Activated naive CD4-positive, alpha-beta T cell treated with anti-CD3 and anti-CD28 coated beads for 36 hours (primary cell): ENCODE measurements at regions of chr16 and their contacts with region 1.

Region 1: GRCh38 chr16:55465077-55465896 is 13.7 kb upstream of the MMP2 start:
- DNase-seq: peak; percentile 89
- H3K4me3 Mint-ChIP-seq: no peak overlapping the region
- H3K27ac Mint-ChIP-seq: no peak overlapping the region
- H3K4me1 Mint-ChIP-seq: no peaks in the 10 kb centered on the region
- H3K27me3 Mint-ChIP-seq: peaks cover 3% of the 10 kb centered on the region

Region 2: DNA sequence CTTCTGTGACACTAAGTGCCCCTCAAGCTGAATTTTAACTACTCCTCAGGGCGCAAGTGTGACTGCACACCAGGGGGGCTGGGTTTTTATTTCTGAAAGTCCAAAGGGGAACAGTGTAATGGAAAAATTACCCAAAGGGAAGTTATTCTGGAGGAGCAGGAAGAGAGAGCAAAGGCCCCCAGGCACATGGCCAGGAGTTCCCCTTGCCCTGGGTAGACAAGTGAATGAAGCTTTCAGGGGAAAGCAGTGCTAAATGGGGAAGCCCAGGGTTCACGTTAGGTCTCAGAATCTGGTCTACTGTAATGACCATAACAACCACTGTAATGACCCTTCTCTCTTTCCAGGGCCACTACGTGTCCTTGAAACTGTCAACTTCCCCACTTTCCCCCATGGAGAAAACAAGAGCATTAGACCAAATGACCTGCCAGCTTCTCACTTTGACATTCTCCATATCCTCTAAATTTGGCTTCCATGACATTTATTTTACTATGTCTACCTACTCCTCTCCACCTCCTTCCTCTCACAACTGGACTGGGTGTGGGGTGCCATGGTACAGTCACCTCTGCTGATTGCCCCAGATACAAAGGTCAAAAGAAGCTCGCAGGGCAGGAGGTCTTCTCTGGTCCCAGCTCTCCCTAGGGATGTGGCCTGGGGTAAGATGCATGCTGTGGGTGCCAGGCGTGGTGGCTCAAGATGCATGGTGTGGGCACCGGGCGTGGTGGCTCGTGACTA is 20.4 kb before region 1 on chr16:
- CTCF ChIA-PET with region 1: interaction called, 19 read pairs
- intact Hi-C with region 1: no loop called
- DNase-seq: no peak
- H3K4me3 Mint-ChIP-seq: no peak overlapping the region
- H3K27ac Mint-ChIP-seq: no peak overlapping the region
- H3K4me1 Mint-ChIP-seq: no peaks in the 10 kb centered on the region
- H3K27me3 Mint-ChIP-seq: peaks cover 9% of the 10 kb centered on the region

Region 3: DNA sequence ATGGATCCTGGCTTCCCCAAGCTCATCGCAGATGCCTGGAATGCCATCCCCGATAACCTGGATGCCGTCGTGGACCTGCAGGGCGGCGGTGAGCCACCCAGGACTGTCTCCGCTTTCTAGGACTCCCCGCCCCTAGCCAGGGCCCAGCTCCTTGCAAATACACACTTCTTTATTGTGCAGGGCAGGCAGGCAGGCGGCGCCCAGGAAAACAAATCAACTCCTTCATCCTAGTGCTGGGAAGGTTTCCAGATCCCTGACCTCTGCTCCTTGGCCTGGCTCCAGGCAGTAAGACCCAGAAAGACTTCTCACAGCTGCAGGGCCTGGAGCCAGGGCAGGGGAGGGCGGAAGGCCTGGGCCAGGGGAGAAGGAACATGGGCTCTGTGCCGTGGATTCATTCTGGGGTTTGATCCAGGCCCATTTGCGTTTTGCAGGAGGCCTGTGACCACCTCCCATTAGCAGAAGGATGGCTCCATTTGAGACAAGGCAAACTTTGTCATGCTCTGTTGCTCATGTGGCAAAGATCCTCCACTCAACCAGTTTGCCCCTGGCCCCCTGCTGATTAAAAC is 37.6 kb after region 1 on chr16:
- CTCF ChIA-PET with region 1: interaction called, 16 read pairs
- intact Hi-C with region 1: no loop called
- DNase-seq: no peak
- H3K4me3 Mint-ChIP-seq: no peak overlapping the region
- H3K27ac Mint-ChIP-seq: no peak overlapping the region
- H3K4me1 Mint-ChIP-seq: peaks cover 8% of the 10 kb centered on the region
- H3K27me3 Mint-ChIP-seq: peaks cover 15% of the 10 kb centered on the region

Region 4: DNA sequence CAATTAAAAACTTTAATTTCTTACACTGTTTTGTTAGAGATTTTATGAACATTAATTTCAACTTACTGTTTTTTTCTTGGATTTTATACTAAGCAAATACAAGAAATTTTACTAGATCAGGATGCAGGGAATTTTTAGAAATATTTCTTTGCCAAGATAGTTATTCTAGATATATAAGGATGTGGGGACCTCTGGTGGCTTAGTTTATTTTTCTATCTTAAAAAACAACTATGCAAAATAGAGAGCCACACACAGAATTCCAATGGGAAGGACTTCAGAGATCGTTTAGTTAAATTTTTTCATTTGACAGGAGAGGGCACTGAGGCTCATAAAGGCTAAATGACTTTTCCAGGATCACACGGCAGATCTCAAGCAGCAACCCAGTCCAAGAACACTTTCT is 78.2 kb after region 1 on chr16:
- CTCF ChIA-PET with region 1: interaction called, 17 read pairs
- intact Hi-C with region 1: loop called (anchors 1 kb)
- DNase-seq: no peak
- H3K4me3 Mint-ChIP-seq: no peak overlapping the region
- H3K27ac Mint-ChIP-seq: no peak overlapping the region
- H3K4me1 Mint-ChIP-seq: no peaks in the 10 kb centered on the region
- H3K27me3 Mint-ChIP-seq: no peaks in the 10 kb centered on the region

Region 5: DNA sequence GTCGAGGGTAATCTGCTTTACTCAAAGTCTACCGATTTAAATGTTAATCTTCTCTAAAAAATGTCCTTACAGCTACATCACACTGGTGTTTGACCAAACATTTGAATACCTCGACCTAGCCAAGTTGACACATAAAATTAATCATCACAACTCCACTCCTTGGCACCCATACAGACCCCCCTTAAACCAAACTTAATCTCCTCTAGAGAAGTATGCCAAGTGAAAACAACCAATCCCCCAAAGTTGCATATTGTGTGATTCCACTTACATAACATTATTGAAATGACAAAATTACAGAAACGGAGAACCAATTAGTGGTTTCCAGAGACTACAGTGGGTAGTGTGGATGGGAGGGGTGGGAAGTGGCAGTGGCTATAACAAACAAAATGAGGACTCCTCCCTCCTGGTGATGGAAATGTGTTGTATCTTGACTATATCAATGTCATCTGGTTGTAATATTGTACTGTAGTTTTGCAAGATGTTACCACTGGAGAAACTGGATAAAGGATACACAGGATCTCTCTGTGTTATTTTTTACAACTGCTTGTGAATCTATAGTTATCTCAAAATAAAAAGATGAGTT is 140.6 kb after region 1 on chr16:
- CTCF ChIA-PET with region 1: no interaction called
- intact Hi-C with region 1: no loop called
- DNase-seq: no peak
- H3K4me3 Mint-ChIP-seq: no peak overlapping the region
- H3K27ac Mint-ChIP-seq: no peak overlapping the region
- H3K4me1 Mint-ChIP-seq: no peaks in the 10 kb centered on the region
- H3K27me3 Mint-ChIP-seq: peaks cover 3% of the 10 kb centered on the region

Region 6: GRCh38 chr16:55842369-55843104 is 377.2 kb after region 1 on chr16:
- CTCF ChIA-PET with region 1: interaction called, 29 read pairs
- intact Hi-C with region 1: loop called (anchors 1 kb)
- DNase-seq: peak; percentile 22
- H3K4me3 Mint-ChIP-seq: no peak overlapping the region
- H3K27ac Mint-ChIP-seq: no peak overlapping the region
- H3K4me1 Mint-ChIP-seq: no peaks in the 10 kb centered on the region
- H3K27me3 Mint-ChIP-seq: peaks cover 20% of the 10 kb centered on the region

Region 7: GRCh38 chr16:56317998-56318826 is 852.9 kb after region 1 on chr16:
- CTCF ChIA-PET with region 1: interaction called, 4 read pairs
- intact Hi-C with region 1: loop called (anchors 1 kb)
- DNase-seq: peak; percentile 86
- H3K4me3 Mint-ChIP-seq: peak overlapping the region; percentile 3
- H3K27ac Mint-ChIP-seq: no peak overlapping the region
- H3K4me1 Mint-ChIP-seq: peaks cover 2% of the 10 kb centered on the region
- H3K27me3 Mint-ChIP-seq: no peaks in the 10 kb centered on the region